Activated CD4-positive, alpha-beta memory T cell treated with anti-CD3 and anti-CD28 coated beads for 36 hours (primary cell): ENCODE measurements at regions of chr6 and their contacts with region 1.

Region 1: DNA sequence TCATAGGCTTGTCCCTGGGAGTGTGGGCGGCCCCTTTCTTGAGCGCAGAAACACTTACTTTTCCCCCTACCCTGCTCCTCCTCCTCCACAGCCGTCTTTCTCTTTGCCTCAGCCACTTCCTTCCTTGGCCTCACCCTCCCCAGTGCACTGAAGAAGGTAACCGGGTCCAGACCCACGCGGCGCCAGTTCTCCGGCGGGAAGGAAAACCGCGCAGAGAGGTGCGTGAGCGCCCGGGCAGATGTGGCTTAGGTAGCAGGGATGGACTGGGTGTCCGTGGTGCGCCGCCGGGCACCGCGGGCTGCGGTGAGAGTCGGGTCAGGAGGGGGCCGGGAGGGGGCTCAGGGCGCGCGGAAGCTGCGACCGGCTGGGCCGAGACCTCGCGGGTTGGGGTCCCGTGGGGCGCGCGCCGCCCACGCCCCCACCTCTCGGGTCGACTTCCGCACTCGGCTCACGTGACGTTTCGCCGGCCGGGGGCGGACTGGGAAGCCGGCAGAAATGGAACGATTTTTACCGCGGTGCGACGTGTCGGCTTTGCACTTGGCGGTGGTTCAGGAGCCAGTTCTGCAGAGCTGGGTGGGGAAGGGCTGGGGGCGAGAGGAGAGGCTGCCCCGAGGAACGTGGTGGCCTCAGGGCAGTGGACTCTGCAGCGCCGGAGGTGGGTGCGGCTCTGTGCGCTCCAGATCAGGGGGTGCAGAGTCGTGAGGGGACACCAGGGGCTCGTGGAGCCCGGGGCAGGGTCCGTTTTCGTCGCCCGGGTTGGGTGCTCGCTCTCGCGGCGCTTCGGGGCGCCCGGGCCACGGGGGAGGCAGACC is at the start of gene ABRACL:
- DNase-seq: peak; percentile 91
- H3K4me3 Mint-ChIP-seq: no peak within 1 kb of the TSS
- H3K27ac Mint-ChIP-seq: no peak within 1 kb of the TSS
- H3K4me1 Mint-ChIP-seq: peaks cover 20% of the 10 kb centered on the region
- H3K27me3 Mint-ChIP-seq: no peaks in the 10 kb centered on the region
- total RNA-seq, gene ABRACL: 179 to 182 TPM

Region 2: GRCh38 chr6:138654715-138655634 is 373.9 kb before region 1 on chr6:
- CTCF ChIA-PET with region 1: no interaction called
- POLR2A ChIA-PET with region 1: no interaction called
- intact Hi-C with region 1: loop called (anchors 5 kb)
- DNase-seq: peak; percentile 64
- H3K4me3 Mint-ChIP-seq: no peak overlapping the region
- H3K27ac Mint-ChIP-seq: no peak overlapping the region
- H3K4me1 Mint-ChIP-seq: peaks cover 24% of the 10 kb centered on the region
- H3K27me3 Mint-ChIP-seq: peaks cover 11% of the 10 kb centered on the region

Region 3: DNA sequence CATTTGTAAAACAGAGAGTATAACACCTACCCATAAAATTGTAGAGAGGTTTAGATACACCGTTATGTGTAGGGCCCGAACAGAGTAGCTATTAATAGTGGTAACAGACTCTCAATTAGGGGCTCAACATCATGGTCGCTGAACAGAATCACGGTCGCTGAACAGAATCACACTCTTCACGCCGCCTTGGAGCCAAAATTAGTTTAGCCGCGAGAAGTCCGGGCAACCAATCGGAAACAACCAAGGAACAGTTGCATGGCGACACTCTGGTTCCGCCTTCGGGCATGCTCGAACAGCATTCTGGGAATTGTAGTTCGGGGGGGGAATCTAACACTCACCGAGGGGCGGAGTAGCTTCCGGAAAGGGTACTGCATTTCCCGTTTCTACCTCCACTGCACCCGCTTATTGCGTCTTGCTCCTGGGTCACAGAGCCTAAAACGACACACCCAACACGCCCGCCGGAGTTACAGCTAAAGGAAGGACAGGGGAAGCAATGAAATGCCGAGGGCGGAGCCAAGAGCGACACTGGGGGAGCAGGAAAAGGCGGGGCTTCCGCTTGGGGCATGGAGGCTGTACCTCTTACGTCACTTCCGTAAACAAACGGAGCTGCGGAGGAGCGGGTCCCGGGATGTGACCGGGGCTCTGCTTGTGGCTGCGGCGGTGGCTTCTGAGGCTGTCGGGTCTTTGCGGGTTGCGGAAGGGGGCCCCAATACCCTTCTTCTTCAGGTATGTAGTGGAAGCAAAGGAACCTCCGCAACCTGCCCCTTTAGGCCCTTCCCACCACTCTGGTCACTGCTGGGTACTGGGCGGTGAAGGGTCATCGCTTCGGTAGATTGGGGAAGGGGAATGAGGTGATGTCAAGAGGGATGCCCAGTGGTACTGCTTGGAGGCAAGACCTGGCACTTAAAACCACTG is 255.4 kb before region 1 on chr6 and contains the start of gene CCDC28A:
- CTCF ChIA-PET with region 1: no interaction called
- POLR2A ChIA-PET with region 1: no interaction called
- intact Hi-C with region 1: loop called (anchors 1 kb)
- DNase-seq: peak; percentile 94
- H3K4me3 Mint-ChIP-seq: peak within 1 kb of the TSS; percentile 97
- H3K27ac Mint-ChIP-seq: peak within 1 kb of the TSS; percentile 99
- H3K4me1 Mint-ChIP-seq: peaks cover 22% of the 10 kb centered on the region
- H3K27me3 Mint-ChIP-seq: no peaks in the 10 kb centered on the region
- total RNA-seq, gene CCDC28A: 17.9 to 18.8 TPM

Region 4: DNA sequence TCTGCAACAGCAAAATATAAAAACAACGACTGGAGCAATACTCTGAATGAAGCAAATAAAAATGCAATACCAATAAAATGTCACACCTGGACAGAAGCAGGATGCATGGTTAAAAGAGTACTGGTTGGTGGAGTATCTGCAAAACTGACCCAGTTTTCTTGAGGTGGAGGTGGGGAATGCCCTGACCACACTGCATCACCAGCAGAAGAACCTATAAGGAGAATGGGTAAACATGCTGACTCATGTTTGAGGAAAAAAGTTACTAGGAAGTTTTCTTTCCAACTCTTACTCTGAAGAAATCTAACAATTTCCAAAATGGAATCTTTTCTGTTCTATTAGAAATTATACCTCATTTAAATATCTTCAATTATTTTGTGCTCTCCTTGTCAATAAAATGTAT is 84.5 kb before region 1 on chr6:
- CTCF ChIA-PET with region 1: no interaction called
- POLR2A ChIA-PET with region 1: interaction called, 5 read pairs
- intact Hi-C with region 1: loop called (anchors 2 kb)
- DNase-seq: peak; percentile 62
- H3K4me3 Mint-ChIP-seq: no peak overlapping the region
- H3K27ac Mint-ChIP-seq: no peak overlapping the region
- H3K4me1 Mint-ChIP-seq: peaks cover 43% of the 10 kb centered on the region
- H3K27me3 Mint-ChIP-seq: no peaks in the 10 kb centered on the region

Region 5: GRCh38 chr6:139099984-139100383 is 71.1 kb after region 1 on chr6:
- CTCF ChIA-PET with region 1: no interaction called
- POLR2A ChIA-PET with region 1: no interaction called
- intact Hi-C with region 1: loop called (anchors 2 kb)
- DNase-seq: peak; percentile 46
- H3K4me3 Mint-ChIP-seq: no peak overlapping the region
- H3K27ac Mint-ChIP-seq: peak overlapping the region; percentile 19
- H3K4me1 Mint-ChIP-seq: peaks cover 19% of the 10 kb centered on the region
- H3K27me3 Mint-ChIP-seq: no peaks in the 10 kb centered on the region

Region 6: DNA sequence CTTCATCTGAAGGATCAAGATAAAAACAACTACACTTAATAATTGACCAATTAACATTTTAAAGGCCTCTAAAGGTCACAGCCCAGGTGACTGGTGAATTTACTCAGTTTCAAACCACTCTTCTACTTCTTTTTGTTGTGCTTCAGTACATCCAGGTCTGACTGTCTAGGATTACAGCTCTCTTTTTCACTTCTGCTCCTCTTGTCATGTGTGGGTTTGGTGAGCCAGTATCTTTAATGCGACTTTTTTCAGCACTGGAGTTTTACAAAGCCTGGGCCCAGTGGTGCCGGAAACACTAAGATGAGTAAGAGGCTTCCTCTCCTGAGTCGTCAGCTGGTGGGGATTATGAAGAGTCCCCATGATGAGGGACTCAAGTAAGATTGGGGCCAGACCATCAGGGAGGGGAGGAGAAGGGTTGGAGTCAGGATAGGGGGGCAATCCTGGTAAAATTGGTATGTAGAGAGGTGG is 133.0 kb after region 1 on chr6:
- CTCF ChIA-PET with region 1: no interaction called
- POLR2A ChIA-PET with region 1: no interaction called
- intact Hi-C with region 1: loop called (anchors 1 kb)
- DNase-seq: peak; percentile 88
- H3K4me3 Mint-ChIP-seq: peak overlapping the region; percentile 61
- H3K27ac Mint-ChIP-seq: peak overlapping the region; percentile 96
- H3K4me1 Mint-ChIP-seq: peaks cover 92% of the 10 kb centered on the region
- H3K27me3 Mint-ChIP-seq: no peaks in the 10 kb centered on the region